ENCODE measurements at regions of chr11 and their contacts with region 1.

Region 1: GRCh38 chr11:117226388-117227385 is 5.2 kb downstream of the PCSK7 start:
- DNase-seq: peak; percentile 83
- ATAC-seq: peak; percentile 73
- H3K4me3 ChIP-seq: no peak overlapping the region
- H3K27ac ChIP-seq: no peak overlapping the region
- H3K4me1 ChIP-seq: peaks cover 22% of the 10 kb centered on the region
- H3K27me3 ChIP-seq: no peaks in the 10 kb centered on the region
- CTCF ChIP-seq: peak; percentile 90

Region 2: GRCh38 chr11:116732271-116733042 is 494.2 kb before region 1 on chr11:
- CTCF ChIA-PET with region 1: no interaction called
- POLR2A ChIA-PET with region 1: no interaction called
- intact Hi-C with region 1: loop called (anchors 2 kb)
- DNase-seq: peak; percentile 81
- ATAC-seq: peak; percentile 91
- H3K4me3 ChIP-seq: no peak overlapping the region
- H3K27ac ChIP-seq: no peak overlapping the region
- H3K4me1 ChIP-seq: no peaks in the 10 kb centered on the region
- H3K27me3 ChIP-seq: no peaks in the 10 kb centered on the region
- CTCF ChIP-seq: peak; percentile 84

Region 3: GRCh38 chr11:117185736-117186430 is 40.8 kb before region 1 on chr11:
- CTCF ChIA-PET with region 1: interaction called, 3 read pairs
- POLR2A ChIA-PET with region 1: interaction called, 3 read pairs
- intact Hi-C with region 1: loop called (anchors 2 kb)
- DNase-seq: no peak
- ATAC-seq: no peak
- H3K4me3 ChIP-seq: no peak overlapping the region
- H3K27ac ChIP-seq: peak overlapping the region; percentile 17; the same call in 1 of the 2 replicates
- H3K4me1 ChIP-seq: peaks cover 25% of the 10 kb centered on the region
- H3K27me3 ChIP-seq: no peaks in the 10 kb centered on the region
- CTCF ChIP-seq: no peak